H1 (cell line): ENCODE measurements at regions of chr6 and their contacts with region 1.

Region 1: GRCh38 chr6:6131492-6132109 is 124.9 kb upstream of the NRN1 start:
- DNase-seq: peak in 1 of 2 experiments; percentile 31
- H3K4me3 ChIP-seq: no peak overlapping the region
- H3K27ac ChIP-seq: no peak overlapping the region
- H3K4me1 ChIP-seq: no peaks in the 10 kb centered on the region
- H3K27me3 ChIP-seq: no peaks in the 10 kb centered on the region
- CTCF ChIP-seq: peak in 2 of 3 experiments; percentile 62 to 63; a peak in 3 of 4 replicates
- EP300 ChIP-seq: no peak
- POLR2A ChIP-seq: no peak
- RAD21 ChIP-seq: peak; percentile 60 to 72

Region 2: GRCh38 chr6:6105472-6106036 is 26.0 kb before region 1 on chr6:
- CTCF ChIA-PET with region 1: interaction called, 38 read pairs
- POLR2A ChIA-PET with region 1: no interaction called
- DNase-seq: peak; percentile 9 to 53
- H3K4me3 ChIP-seq: no peak overlapping the region
- H3K27ac ChIP-seq: no peak overlapping the region
- H3K4me1 ChIP-seq: no peaks in the 10 kb centered on the region
- H3K27me3 ChIP-seq: no peaks in the 10 kb centered on the region
- CTCF ChIP-seq: peak; percentile 57 to 66 (median 64)
- EP300 ChIP-seq: no peak
- POLR2A ChIP-seq: no peak
- RAD21 ChIP-seq: peak; percentile 72 to 76

Region 3: GRCh38 chr6:6148192-6148815 is 16.7 kb after region 1 on chr6:
- CTCF ChIA-PET with region 1: interaction called, 35 read pairs
- POLR2A ChIA-PET with region 1: interaction called, 3 read pairs
- DNase-seq: no peak
- H3K4me3 ChIP-seq: no peak overlapping the region
- H3K27ac ChIP-seq: no peak overlapping the region
- H3K4me1 ChIP-seq: peaks cover 0 to 4% (median 1%) of the 10 kb centered on the region in 4 experiments; a peak in 2 of 7 replicates
- H3K27me3 ChIP-seq: peaks cover 0 to 1% (median 0%) of the 10 kb centered on the region in 4 experiments; a peak in 1 of 7 replicates
- CTCF ChIP-seq: no peak
- EP300 ChIP-seq: no peak
- POLR2A ChIP-seq: no peak
- RAD21 ChIP-seq: no peak

Region 4: DNA sequence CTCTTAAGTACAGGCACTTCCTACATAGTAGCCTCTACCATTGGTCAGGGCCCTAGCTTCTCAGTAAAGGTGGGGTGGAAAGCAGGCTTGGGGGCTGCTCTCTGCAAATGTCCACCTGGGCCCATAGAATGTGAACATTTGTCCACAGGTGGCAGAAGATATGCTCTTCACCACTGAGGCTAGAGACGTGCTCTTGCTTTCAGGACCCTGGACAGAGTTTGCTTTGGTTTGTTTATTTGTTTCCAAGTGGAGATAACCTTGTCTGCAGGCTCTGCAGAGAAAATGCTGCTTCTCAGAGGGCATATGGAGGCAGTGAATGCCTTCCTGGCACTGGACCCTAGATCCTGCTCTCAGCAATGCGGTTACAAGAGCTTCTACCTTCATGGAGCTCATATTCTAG is 59.9 kb after region 1 on chr6:
- CTCF ChIA-PET with region 1: no interaction called
- POLR2A ChIA-PET with region 1: no interaction called
- DNase-seq: peak in 1 of 2 experiments; percentile 49
- H3K4me3 ChIP-seq: no peak overlapping the region
- H3K27ac ChIP-seq: no peak overlapping the region
- H3K4me1 ChIP-seq: peaks cover 0 to 2% (median 0%) of the 10 kb centered on the region in 4 experiments; a peak in 2 of 7 replicates
- H3K27me3 ChIP-seq: no peaks in the 10 kb centered on the region
- CTCF ChIP-seq: no peak
- EP300 ChIP-seq: no peak
- POLR2A ChIP-seq: no peak
- RAD21 ChIP-seq: no peak

Region 5: GRCh38 chr6:6547110-6547879 is 415.7 kb after region 1 on chr6:
- CTCF ChIA-PET with region 1: interaction called, 11 read pairs
- POLR2A ChIA-PET with region 1: no interaction called
- DNase-seq: peak; percentile 69 to 91
- H3K4me3 ChIP-seq: peak overlapping the region; percentile 25 to 67 (median 58); a peak in 7 of 8 replicates
- H3K27ac ChIP-seq: no peak overlapping the region
- H3K4me1 ChIP-seq: peaks cover 5 to 11% (median 7%) of the 10 kb centered on the region in 4 experiments
- H3K27me3 ChIP-seq: peaks cover 2 to 20% (median 13%) of the 10 kb centered on the region in 4 experiments; a peak in 6 of 7 replicates
- CTCF ChIP-seq: peak; percentile 79 to 95 (median 94)
- EP300 ChIP-seq: no peak; a peak in 1 of 3 replicates
- POLR2A ChIP-seq: no peak
- RAD21 ChIP-seq: peak; percentile 93 to 94